ENCODE measurements at regions of chr20 and their contacts with region 1.

Region 1: DNA sequence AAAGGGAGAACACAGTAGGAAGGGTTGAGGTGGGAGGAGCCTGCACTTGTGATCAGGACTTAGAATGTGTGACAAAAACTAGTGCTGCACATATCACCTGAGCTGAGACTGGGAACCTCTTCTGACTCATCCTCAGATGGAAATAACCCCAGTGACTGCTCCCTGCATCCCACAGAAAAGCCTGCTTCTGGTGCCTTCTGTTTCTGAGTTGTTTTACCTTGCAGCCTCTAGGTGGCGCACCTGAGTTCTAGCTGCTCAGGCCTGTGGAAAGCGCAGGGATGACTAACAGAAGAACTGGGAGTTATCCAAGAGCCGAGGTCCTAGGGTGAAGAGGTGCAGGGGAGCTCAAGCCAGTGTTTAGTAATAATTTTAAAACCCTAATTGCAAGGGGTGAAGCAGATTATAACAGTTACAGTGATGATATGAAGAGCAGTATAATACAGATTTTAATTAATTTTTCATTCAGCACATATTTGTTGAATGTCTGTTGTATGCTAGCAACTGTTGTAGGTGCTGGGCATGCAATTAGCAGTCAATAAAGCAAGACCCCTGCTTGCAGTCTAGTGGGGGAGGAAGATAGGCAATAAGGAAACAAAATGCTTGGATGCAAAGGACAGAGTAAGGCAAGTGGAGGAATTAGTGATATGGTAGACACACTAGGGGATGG is 302.5 kb downstream of the DHX35 start:
- DNase-seq: peak; percentile 86
- H3K4me3 Mint-ChIP-seq: no peak overlapping the region
- H3K27ac Mint-ChIP-seq: no peak overlapping the region
- H3K4me1 Mint-ChIP-seq: peaks cover 19% of the 10 kb centered on the region
- H3K27me3 Mint-ChIP-seq: no peaks in the 10 kb centered on the region
- CTCF ChIP-seq: peak; percentile 87

Region 2: DNA sequence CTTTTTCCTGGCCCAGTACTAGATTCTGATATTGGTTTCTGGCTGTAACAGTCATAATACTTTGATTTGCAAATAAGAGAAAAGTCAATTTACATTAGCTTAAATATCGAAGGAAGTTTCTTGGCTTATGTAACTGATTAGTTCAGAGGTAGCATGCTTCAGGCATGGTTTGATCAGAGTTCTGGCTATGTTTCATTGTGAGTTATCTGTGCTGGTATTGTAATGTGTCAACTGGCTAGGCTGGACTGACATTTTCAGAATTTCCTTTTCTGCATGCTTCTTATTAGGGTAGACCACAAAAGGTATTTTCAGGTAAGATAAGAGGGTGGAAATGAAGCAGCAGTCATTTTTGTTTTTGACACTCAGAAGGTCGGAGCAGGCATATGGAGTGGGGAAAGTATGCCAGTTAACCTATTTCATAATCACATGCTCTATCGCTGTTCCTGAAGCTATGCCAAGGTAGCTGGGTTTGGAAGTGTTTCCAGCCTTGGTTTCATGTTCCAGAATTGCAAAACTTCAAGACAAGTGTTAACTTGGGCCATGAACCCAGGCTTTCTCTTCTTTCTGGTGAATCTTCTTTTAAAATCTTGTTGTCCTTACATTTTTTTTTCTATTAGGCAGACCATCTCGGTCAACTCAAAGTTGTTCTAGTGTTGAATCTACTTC is 57.6 kb before region 1 on chr20:
- CTCF ChIA-PET with region 1: interaction called, 16 read pairs
- POLR2A ChIA-PET with region 1: no interaction called
- intact Hi-C with region 1: no loop called
- DNase-seq: peak; percentile 87
- H3K4me3 Mint-ChIP-seq: no peak overlapping the region
- H3K27ac Mint-ChIP-seq: peak overlapping the region; percentile 13
- H3K4me1 Mint-ChIP-seq: peaks cover 18% of the 10 kb centered on the region
- H3K27me3 Mint-ChIP-seq: no peaks in the 10 kb centered on the region
- CTCF ChIP-seq: no peak

Region 3: DNA sequence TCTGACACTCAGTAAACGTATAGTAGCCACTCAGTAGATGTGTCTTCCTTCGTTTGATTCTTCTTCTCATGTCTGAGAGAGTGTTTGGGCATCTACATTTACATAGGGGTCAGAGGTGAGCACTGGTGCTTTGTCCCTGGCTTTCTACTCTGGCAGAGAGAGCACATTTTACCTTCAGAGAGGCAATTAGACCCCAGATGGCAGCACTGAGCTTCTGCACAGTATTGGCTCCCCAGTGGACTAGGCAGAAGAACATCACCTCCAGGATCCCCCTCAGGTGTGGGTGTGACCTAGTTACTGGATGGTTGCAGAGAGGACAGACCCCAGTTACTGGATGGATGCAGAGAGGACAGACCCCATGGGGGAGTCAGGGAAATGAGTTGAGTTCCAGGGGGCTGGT is 24.7 kb after region 1 on chr20:
- CTCF ChIA-PET with region 1: interaction called, 13 read pairs
- POLR2A ChIA-PET with region 1: no interaction called
- intact Hi-C with region 1: no loop called
- DNase-seq: peak; percentile 8
- H3K4me3 Mint-ChIP-seq: no peak overlapping the region
- H3K27ac Mint-ChIP-seq: no peak overlapping the region
- H3K4me1 Mint-ChIP-seq: peaks cover 6% of the 10 kb centered on the region
- H3K27me3 Mint-ChIP-seq: no peaks in the 10 kb centered on the region
- CTCF ChIP-seq: peak; percentile 19

Region 4: GRCh38 chr20:39795401-39796272 is 531.0 kb after region 1 on chr20:
- CTCF ChIA-PET with region 1: interaction called, 10 read pairs
- POLR2A ChIA-PET with region 1: no interaction called
- intact Hi-C with region 1: no loop called
- DNase-seq: peak; percentile 3
- H3K4me3 Mint-ChIP-seq: no peak overlapping the region
- H3K27ac Mint-ChIP-seq: no peak overlapping the region
- H3K4me1 Mint-ChIP-seq: peaks cover 17% of the 10 kb centered on the region
- H3K27me3 Mint-ChIP-seq: no peaks in the 10 kb centered on the region
- CTCF ChIP-seq: no peak

Region 5: GRCh38 chr20:40160097-40160550 is 895.5 kb after region 1 on chr20:
- CTCF ChIA-PET with region 1: interaction called, 19 read pairs
- POLR2A ChIA-PET with region 1: no interaction called
- intact Hi-C with region 1: no loop called
- DNase-seq: peak; percentile 78
- H3K4me3 Mint-ChIP-seq: no peak overlapping the region
- H3K27ac Mint-ChIP-seq: no peak overlapping the region
- H3K4me1 Mint-ChIP-seq: no peaks in the 10 kb centered on the region
- H3K27me3 Mint-ChIP-seq: no peaks in the 10 kb centered on the region
- CTCF ChIP-seq: peak; percentile 78

Region 6: DNA sequence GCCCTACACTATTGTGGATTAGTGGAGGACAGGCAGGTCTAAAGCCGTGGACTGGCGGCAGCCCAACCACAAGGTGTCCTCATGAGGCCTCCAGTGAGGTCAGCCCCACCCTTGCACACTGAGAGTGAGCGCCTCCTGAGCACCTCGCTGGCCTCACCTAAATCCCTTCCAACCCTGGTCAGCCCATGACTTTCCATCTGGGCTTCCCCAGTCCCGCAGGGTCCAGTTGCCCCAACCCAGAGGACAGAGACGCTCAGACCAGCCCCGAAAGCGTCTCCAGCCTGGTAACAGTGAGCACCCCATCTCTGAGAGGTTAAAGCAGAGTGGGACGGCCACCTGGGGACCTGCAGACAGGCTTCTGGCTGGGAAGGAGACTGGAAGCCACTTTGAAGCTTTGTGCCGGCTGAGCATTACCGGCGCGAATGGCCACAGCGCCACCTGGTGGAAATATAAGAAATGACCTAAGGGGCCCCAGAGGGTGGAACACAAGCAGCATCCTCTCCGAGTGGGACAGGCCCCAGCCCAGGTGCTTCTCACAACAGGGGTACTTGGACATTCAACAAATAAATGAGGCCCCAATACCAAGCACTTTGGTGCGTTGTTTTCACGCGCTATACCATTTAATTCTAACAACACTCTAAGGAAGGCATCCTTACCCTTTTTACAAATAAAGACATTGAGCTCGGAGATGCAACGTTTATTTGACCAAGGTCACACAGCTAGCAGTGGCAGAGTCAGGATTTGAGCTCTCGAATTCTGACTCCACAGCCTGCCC is 1698.3 kb after region 1 on chr20:
- CTCF ChIA-PET with region 1: interaction called, 52 read pairs
- POLR2A ChIA-PET with region 1: no interaction called
- intact Hi-C with region 1: loop called (anchors 5 kb)
- DNase-seq: peak; percentile 71
- H3K4me3 Mint-ChIP-seq: no peak overlapping the region
- H3K27ac Mint-ChIP-seq: no peak overlapping the region
- H3K4me1 Mint-ChIP-seq: peaks cover 20% of the 10 kb centered on the region
- H3K27me3 Mint-ChIP-seq: no peaks in the 10 kb centered on the region
- CTCF ChIP-seq: peak; percentile 84

Measured in MCF 10A (cell line).